KBM-7 (cell line): ENCODE measurements at regions of chr12 and their contacts with region 1.

Region 1: GRCh38 chr12:111396726-111397445 is 8.8 kb upstream of the SH2B3 start:
- DNase-seq: peak; percentile 90

Region 2: DNA sequence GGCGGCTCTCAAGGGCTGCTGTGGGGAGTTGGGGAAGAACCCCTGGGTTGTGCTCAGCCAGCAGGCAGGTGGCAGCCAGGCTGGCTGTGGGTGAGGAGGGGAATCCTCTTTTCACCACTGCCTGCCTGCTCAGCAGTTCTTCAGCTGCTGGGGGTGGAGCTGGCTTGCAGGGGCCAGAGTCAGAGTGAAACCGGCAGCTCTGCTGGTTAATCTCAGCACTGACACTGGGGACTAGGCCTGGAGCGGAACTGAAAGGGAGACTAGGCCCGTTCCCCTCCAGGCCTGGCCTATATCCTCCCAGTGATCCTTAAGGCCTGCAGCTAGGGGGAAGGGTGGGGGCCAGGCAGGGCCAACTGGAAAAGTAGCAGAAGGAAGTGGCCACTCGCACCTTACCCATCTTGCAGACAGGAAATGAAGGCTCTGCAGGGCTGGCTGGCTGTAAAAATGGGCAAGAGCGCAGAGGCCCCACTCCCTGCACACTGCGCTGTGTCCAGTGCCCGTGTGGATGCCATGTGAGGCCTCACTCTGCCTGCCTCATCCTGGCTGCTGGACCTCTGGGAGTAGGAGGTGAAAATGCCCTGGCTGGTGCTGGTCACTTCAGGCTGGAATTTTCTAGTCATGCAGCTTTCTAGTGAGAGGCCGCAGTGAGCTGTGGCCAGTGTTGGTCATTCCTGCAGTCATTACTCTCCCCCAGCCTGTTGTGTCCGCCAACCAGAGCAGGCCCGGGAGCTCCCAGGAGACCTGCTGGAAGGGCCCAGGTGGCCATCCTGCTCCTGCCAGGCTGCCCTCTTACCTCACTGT is 48.2 kb after region 1 on chr12:
- in situ Hi-C with region 1: loop called (anchors 10 kb)
- DNase-seq: peak; percentile 82